ENCODE measurements at regions of chr2 and their contacts with region 1.

Region 1: GRCh38 chr2:111037128-111037527 is 83.6 kb upstream of the BCL2L11 start:
- DNase-seq: peak; percentile 31
- ATAC-seq: peak; percentile 80
- H3K4me3 ChIP-seq: no peak overlapping the region
- H3K27ac ChIP-seq: no peak overlapping the region
- H3K4me1 ChIP-seq: peaks cover 3% of the 10 kb centered on the region
- H3K27me3 ChIP-seq: peaks cover 2 to 6% of the 10 kb centered on the region in 2 experiments; a peak in 3 of 4 replicates
- CTCF ChIP-seq: no peak
- EP300 ChIP-seq: peak in 1 of 2 experiments; percentile 33; a peak in 1 of 4 replicates
- POLR2A ChIP-seq: no peak
- RAD21 ChIP-seq: no peak

Region 2: DNA sequence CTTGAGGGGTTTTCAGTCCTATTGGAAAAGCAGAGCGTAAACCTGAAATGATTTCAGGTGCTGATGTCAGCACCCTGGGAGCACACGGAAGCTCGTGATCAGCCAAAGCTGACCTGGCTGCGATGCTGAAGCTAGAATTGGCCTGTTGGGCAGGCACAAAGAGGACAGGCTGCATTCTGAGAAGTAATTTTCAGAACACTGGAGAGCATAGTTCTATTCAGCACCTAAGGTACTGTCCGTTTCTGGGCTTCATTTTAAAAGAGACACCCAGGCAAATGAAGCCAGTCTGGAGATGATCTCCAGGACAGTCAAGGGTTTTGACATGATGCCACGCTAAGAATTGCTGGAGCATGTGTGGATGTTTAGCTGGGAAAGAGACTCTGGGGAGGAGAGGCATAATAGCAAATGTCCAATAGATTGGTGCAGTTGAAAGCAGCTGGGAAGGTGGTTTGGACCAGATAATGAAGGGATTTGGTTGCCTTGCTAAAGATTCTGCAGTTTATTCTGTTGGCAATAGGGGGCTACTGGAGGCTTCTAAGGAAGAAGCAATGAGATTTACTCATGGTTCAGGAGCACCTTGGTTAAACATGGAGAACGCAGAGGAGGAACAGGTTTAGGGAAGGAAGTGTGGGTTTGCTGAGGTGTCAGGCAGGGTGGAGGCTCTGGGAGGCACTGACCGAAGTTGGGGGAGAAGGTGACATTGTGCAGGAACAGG is 218.2 kb before region 1 on chr2:
- CTCF ChIA-PET with region 1: no interaction called
- POLR2A ChIA-PET with region 1: no interaction called
- RAD21 ChIA-PET with region 1: no interaction called
- SMC1A ChIA-PET with region 1: no interaction called
- in situ Hi-C with region 1: no loop called
- intact Hi-C with region 1: no loop called
- DNase-seq: no peak
- ATAC-seq: no peak
- H3K4me3 ChIP-seq: no peak overlapping the region
- H3K27ac ChIP-seq: no peak overlapping the region
- H3K4me1 ChIP-seq: peaks cover 5% of the 10 kb centered on the region
- H3K27me3 ChIP-seq: no peaks in the 10 kb centered on the region; a peak in 1 of 4 replicates
- CTCF ChIP-seq: 0 out of 6 replicates have a peak, but pooled peaks of 2 of the 3 experiments have one; percentile 5 to 13
- EP300 ChIP-seq: no peak
- POLR2A ChIP-seq: no peak
- RAD21 ChIP-seq: peak; percentile 38

Region 3: GRCh38 chr2:110900191-110900590 is 136.9 kb before region 1 on chr2:
- CTCF ChIA-PET with region 1: no interaction called
- POLR2A ChIA-PET with region 1: no interaction called
- RAD21 ChIA-PET with region 1: no interaction called
- SMC1A ChIA-PET with region 1: no interaction called
- in situ Hi-C with region 1: no loop called
- intact Hi-C with region 1: no loop called
- DNase-seq: no peak
- ATAC-seq: no peak
- H3K4me3 ChIP-seq: no peak overlapping the region
- H3K27ac ChIP-seq: no peak overlapping the region
- H3K4me1 ChIP-seq: no peaks in the 10 kb centered on the region
- H3K27me3 ChIP-seq: peaks cover 0 to 1% of the 10 kb centered on the region in 2 experiments; a peak in 1 of 4 replicates
- CTCF ChIP-seq: no peak
- EP300 ChIP-seq: no peak
- POLR2A ChIP-seq: no peak
- RAD21 ChIP-seq: no peak

Region 4: DNA sequence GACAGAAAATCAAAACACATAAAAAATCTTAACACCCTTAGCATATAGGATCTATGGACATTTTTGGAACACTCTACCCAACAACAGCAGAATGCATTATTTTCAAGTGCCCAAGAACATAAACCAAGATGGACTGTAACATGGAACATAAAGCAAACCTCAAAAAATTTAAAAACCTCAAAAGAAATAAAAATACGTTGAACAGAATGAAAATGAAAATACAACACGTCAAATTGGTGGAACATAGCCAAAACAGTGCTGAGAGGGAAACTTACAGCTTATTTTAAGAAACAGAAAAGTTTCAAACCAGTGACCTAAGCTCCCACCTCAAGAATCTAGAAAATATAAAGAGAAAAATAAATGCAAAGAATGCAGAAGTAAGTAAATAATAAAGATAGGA is 25.3 kb after region 1 on chr2:
- CTCF ChIA-PET with region 1: no interaction called
- POLR2A ChIA-PET with region 1: no interaction called
- RAD21 ChIA-PET with region 1: interaction called, 3 read pairs
- SMC1A ChIA-PET with region 1: interaction called, 18 read pairs
- in situ Hi-C with region 1: no loop called
- intact Hi-C with region 1: no loop called
- DNase-seq: no peak
- ATAC-seq: peak; percentile 80
- H3K4me3 ChIP-seq: no peak overlapping the region
- H3K27ac ChIP-seq: no peak overlapping the region
- H3K4me1 ChIP-seq: peaks cover 11% of the 10 kb centered on the region
- H3K27me3 ChIP-seq: 0 out of 4 replicates have a peak, but pooled peaks cover 0 to 2% of the 10 kb centered on the region in 2 experiments
- CTCF ChIP-seq: no peak
- EP300 ChIP-seq: peak in 1 of 2 experiments; percentile 69; a peak in 1 of 4 replicates
- POLR2A ChIP-seq: no peak
- RAD21 ChIP-seq: no peak